PC-9 (cell line): ENCODE measurements at regions of chr13 and their contacts with region 1.

Region 1: DNA sequence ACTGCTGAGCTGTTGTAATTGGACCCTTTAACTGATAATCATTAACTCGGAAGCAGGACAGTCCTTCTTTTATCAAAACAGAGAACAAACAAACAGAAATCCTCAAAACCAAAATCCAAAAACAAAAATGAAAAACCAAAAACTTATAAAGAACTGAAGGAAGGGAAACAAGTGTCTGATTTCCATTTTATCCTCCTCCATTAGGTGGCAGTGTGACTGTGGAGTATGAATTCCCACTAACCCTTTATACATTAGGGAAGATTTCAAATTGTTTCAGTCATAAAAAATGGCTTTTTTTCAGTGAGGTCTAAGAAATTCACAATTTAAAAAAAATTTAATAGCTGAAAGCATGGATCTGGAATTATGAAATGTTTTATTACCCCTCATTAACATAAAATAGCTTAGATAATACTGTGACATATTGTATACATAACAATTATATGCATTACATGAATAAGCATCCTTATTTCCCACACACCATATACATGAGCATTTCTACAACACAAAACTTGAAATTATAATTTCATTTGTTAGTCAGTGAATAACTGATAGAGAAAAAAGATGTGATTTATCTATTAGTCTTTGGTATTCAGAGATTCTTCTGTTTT is 1074.3 kb upstream of the PCDH9 start:
- DNase-seq: no peak
- H3K4me3 ChIP-seq: no peak overlapping the region
- H3K27ac ChIP-seq: no peak overlapping the region
- H3K4me1 ChIP-seq: no peaks in the 10 kb centered on the region
- H3K27me3 ChIP-seq: no peaks in the 10 kb centered on the region
- CTCF ChIP-seq: peak; percentile 54

Region 2: DNA sequence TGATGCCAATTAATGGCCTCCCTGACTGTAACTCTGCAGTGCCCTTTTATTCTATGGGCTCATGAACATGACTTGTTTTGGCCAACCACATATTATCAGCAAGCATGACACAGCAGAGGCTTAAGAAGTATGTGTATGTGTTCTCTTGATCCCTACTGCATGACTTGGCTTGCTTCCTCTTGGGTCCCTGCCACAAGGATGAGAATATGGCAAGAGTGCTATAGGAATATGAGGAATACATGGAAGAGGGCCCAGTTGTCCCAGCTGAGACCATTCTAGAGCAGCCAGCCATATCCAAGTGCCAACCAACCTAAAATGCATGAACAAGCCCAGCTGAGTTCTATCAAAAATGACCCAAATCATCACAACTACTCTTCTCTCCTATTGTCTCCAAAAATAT is 497.6 kb before region 1 on chr13:
- CTCF ChIA-PET with region 1: interaction called, 10 read pairs
- POLR2A ChIA-PET with region 1: no interaction called
- intact Hi-C with region 1: no loop called
- DNase-seq: no peak
- H3K4me3 ChIP-seq: no peak overlapping the region
- H3K27ac ChIP-seq: no peak overlapping the region
- H3K4me1 ChIP-seq: no peaks in the 10 kb centered on the region
- H3K27me3 ChIP-seq: no peaks in the 10 kb centered on the region
- CTCF ChIP-seq: no peak